Panc1 (cell line): ENCODE measurements at regions of chr7 and their contacts with region 1.

Region 1: DNA sequence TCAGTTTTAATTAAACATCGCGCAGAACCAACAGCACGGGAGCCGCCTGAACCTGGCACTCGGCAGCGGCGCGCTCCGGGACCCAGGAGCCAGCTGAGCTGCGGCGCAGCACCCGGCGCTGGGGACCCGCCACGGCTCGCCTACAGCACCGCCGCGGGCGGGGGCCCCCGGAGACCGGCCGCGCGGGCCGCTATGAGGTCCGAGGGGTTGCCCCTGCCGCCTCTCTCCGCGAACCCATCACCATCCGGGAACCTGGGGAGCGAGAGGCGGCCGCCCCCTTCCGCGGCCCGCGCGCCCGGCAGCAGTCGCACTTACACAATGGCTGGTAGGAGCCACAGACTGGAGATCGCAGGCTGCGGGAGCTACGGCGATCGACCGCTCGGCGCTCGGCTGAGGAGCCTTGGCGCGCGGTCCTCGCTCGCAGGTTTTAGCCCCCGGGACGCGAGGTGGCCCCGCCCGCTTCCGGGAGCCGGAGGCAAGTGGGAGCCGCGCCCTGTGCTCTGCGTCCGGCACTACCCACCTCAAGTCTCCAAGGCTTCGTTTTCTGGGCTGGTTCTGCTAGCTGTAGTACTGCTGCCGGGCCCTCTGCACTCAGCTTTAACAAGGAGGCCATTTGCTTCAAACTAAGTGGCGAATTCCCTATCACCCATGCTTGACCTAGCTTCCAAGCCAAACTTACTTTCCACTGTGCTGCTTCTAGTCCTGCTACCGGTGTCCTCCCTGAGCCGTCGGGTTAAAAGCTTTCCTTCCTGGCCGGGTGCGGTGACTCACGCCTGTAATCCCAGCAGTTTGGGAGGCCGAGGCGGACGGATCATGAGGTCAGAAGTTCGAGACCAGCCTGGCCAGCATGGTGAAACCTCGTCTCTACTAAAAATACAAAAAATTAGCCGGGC is at the start of gene TPK1:
- DNase-seq: peak; percentile 89
- ATAC-seq: peak; percentile 97
- H3K4me3 ChIP-seq: peak within 1 kb of the TSS; percentile 76 to 98
- H3K27ac ChIP-seq: peak within 1 kb of the TSS; percentile 87
- H3K4me1 ChIP-seq: peaks cover 5% of the 10 kb centered on the region
- H3K27me3 ChIP-seq: no peaks in the 10 kb centered on the region
- CTCF ChIP-seq: no peak
- total RNA-seq, gene TPK1: 3.3 TPM

Region 2: DNA sequence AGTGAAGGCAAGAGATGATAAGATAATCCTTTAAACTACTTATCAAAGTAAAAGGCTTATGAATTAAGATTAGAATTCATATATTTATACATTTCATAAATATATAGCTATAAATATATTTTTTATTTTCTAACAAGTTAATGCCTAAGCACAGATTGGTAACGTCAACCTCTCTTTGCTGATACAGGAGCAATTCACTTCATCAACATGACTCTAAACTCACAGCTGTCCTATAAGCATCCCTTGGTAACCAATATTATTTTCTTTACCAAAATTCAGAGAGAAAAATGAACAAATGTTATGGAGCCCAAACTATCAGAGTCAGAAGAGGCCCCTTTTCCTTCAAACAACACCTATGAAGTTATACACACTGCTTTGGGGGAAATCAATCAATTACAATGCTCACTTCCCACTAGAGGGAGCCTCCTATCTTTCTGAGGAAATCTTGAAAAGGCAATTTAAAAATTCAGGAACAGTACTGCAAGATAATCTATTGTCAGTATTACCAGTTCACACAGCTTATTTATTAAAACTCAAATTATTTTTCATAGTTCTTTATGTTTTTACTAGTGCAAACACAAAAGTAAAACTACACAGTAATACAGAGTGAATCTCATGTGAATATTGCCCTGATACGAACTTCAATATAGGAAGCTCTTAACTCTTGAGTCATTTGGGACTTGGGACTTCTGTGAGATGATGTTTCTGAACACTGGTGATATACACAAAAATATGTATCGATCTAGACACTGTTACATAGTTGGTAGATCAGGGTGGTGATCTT is 381.4 kb before region 1 on chr7:
- CTCF ChIA-PET with region 1: no interaction called
- POLR2A ChIA-PET with region 1: no interaction called
- in situ Hi-C with region 1: no loop called
- intact Hi-C with region 1: no loop called
- DNase-seq: no peak
- ATAC-seq: no peak
- H3K4me3 ChIP-seq: no peak overlapping the region
- H3K27ac ChIP-seq: no peak overlapping the region
- H3K4me1 ChIP-seq: no peaks in the 10 kb centered on the region
- H3K27me3 ChIP-seq: no peaks in the 10 kb centered on the region; the same call in 1 of the 2 replicates
- CTCF ChIP-seq: peak; percentile 31; the same call in 1 of the 2 replicates

Region 3: GRCh38 chr7:144796919-144797318 is 39.0 kb before region 1 on chr7:
- CTCF ChIA-PET with region 1: no interaction called
- POLR2A ChIA-PET with region 1: interaction called, 10 read pairs
- in situ Hi-C with region 1: no loop called
- intact Hi-C with region 1: no loop called
- DNase-seq: no peak
- ATAC-seq: no peak
- H3K4me3 ChIP-seq: no peak overlapping the region
- H3K27ac ChIP-seq: no peak overlapping the region
- H3K4me1 ChIP-seq: no peaks in the 10 kb centered on the region
- H3K27me3 ChIP-seq: no peaks in the 10 kb centered on the region
- CTCF ChIP-seq: no peak

Region 4: DNA sequence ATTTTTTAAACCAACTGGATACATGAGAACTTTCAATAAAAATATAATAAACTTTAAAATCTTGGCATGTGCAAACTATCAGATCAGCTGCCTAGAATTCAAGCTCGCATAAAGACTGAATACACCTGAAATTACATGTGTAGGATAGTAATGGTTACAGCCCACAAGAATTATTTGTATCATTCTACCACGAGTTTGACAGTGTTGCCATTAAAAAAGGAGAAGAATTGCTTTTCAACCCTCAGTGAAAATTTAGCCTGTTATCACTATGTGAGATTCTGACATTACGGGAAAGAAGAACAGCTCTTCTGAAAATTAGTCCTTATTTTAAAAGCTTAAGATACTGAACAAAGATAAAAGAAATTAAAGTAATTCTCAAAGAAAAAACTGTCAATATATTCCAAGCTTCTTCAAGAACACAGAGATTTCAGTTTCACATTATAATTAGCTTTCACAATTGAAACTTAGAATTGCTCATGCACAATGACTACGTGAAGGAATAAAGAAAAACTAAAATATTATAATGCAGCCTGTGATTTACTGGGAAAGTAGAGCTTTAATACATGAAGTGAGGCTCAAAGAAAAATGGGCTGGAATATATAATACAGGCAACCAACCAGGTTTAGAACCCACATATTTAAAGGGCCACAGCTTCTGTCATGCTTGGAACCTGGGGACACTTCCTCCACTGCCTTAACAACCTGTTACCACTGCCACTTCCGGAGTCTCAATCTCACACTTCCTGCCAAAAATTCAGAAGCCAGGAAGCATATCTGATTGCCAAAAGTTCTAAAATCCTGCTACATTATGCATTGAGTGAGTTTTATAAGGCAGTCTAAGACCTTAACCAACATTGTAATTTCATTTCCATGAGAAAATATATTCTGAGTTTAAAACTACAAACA is 23.3 kb before region 1 on chr7:
- CTCF ChIA-PET with region 1: no interaction called
- POLR2A ChIA-PET with region 1: interaction called, 13 read pairs
- in situ Hi-C with region 1: no loop called
- intact Hi-C with region 1: no loop called
- DNase-seq: no peak
- ATAC-seq: no peak
- H3K4me3 ChIP-seq: no peak overlapping the region
- H3K27ac ChIP-seq: no peak overlapping the region
- H3K4me1 ChIP-seq: no peaks in the 10 kb centered on the region
- H3K27me3 ChIP-seq: no peaks in the 10 kb centered on the region
- CTCF ChIP-seq: no peak

Region 5: DNA sequence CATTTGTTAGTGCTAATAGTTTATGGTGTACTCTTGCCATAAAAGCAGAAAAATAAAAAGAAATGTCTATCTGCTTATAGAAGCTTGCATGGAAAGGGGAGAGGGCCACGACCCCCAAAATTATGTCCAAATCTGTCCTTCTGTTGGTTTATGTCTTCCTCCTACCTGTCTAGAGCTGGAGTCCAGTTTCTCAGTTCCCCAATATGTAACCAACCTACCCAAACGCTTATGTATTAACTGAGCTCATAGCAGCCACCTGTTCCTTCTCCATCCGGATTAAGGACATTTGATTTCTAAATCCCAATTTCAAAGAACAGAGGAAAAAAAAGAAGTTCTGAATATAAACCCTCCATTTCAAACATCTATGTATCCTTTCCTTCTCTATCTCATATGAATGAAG is 30.3 kb after region 1 on chr7:
- CTCF ChIA-PET with region 1: no interaction called
- POLR2A ChIA-PET with region 1: no interaction called
- in situ Hi-C with region 1: no loop called
- intact Hi-C with region 1: no loop called
- DNase-seq: no peak
- ATAC-seq: no peak
- H3K4me3 ChIP-seq: no peak overlapping the region
- H3K27ac ChIP-seq: no peak overlapping the region
- H3K4me1 ChIP-seq: no peaks in the 10 kb centered on the region
- H3K27me3 ChIP-seq: no peaks in the 10 kb centered on the region
- CTCF ChIP-seq: no peak

Region 6: DNA sequence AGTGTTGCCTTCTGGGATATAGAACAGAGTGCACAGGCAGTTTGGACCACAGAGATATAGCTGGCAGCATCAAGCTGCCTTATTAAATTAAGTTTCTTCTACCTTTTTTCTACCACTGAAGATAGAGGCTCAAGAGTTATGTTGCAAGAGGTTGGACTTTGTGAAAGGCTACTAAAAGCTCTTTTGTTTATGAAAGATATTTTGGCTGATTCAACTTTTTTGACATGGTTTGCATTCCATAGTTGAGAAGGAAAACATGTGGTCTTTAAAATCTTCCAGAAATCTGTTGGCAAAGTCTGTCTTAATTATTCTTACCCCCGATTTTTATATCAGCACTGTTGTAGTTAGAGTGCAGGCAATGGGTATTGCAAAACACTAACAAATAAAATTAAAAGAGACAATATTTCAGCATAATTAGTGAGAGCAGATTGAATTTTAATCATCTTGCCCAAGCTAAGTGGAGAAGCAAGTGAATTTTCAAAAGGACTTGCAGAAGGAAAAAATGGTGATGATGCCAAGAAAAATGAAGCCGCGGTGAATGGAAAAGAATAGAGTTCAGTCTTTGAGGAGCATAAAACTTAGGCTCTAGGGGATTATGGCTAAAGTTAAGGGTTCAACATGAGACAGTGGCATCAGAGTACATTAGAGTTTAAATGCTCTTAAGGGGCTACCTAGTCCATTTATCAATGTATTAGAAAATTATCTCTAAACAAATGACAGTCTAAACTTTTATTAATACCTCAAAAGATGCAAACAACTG is 829.8 kb after region 1 on chr7:
- CTCF ChIA-PET with region 1: no interaction called
- POLR2A ChIA-PET with region 1: interaction called, 11 read pairs
- in situ Hi-C with region 1: no loop called
- intact Hi-C with region 1: no loop called
- DNase-seq: no peak
- ATAC-seq: no peak
- H3K4me3 ChIP-seq: no peak overlapping the region
- H3K27ac ChIP-seq: no peak overlapping the region
- H3K4me1 ChIP-seq: no peaks in the 10 kb centered on the region
- H3K27me3 ChIP-seq: no peaks in the 10 kb centered on the region
- CTCF ChIP-seq: no peak